Endothelial cell of umbilical vein (primary cell): ENCODE measurements at regions of chr7 and their contacts with region 1.

Region 1: DNA sequence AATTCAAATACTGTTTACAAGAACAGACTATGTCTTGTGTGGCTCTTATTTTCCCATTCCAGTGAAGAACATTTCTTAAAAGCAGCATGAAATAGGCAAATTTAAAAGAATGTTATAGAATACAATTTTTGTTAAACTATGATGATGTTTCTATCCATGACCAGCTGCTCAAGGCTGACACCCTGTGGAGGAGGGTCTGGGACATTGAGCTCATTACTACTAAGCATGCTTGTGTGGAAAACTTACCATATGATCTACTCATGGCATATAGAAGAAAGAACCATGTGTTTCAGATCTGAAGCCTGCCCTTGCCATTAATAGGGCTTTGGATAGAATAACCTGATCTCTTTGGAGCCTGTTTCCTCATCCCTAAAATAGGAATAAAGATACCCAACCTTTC is 125.0 kb downstream of the FOXP2 start:
- DNase-seq: peak; percentile 53
- H3K4me3 ChIP-seq: no peak overlapping the region
- H3K27ac ChIP-seq: no peak overlapping the region
- H3K4me1 ChIP-seq: no peaks in the 10 kb centered on the region
- H3K27me3 ChIP-seq: no peaks in the 10 kb centered on the region
- CTCF ChIP-seq: peak in 1 of 2 donors; percentile 43
- POLR2A ChIP-seq: no peak

Region 2: GRCh38 chr7:114310345-114311110 is 229.0 kb before region 1 on chr7:
- CTCF ChIA-PET with region 1: interaction called, 24 read pairs
- POLR2A ChIA-PET with region 1: no interaction called
- dilution Hi-C with region 1: no loop called
- intact Hi-C with region 1: no loop called
- DNase-seq: no peak
- H3K4me3 ChIP-seq: no peak overlapping the region
- H3K27ac ChIP-seq: no peak overlapping the region
- H3K4me1 ChIP-seq: no peaks in the 10 kb centered on the region
- H3K27me3 ChIP-seq: no peaks in the 10 kb centered on the region
- CTCF ChIP-seq: no peak
- POLR2A ChIP-seq: no peak

Region 3: DNA sequence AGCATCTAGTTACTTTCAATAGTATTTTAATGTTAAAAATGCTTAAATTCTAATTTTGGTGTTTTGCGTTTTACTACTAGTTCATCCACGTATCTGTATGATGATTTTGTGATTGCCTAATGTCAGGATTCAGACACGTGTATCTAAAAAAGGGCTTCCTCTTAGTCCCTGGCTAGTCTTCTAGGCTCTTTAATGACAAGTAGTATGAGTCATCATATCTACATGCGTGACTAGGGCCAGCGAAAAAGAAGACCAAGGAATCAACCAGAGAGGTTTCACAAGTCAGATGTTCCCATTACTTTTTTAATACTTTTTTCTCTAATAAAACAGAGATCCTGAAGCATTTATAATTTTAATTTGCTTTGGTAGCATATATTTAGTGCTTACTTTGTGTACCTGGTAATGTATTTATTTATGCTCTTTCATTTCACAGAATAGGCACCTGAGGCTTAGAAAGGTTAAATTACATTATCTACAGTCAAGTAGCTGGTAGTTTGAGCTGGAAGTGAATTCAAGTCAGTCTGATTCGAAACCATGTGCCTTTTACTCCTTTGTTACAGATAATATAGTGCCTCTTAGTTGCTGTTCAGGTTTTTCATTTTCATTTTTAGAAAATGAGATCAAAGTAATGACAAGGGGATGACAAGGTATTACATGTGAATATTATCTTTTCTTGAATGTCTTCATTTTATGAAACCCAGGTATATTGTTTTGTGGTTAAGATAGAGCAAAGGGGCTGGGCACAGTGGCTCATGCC is 15.4 kb after region 1 on chr7:
- CTCF ChIA-PET with region 1: interaction called, 12 read pairs
- POLR2A ChIA-PET with region 1: no interaction called
- dilution Hi-C with region 1: no loop called
- intact Hi-C with region 1: no loop called
- DNase-seq: no peak
- H3K4me3 ChIP-seq: no peak overlapping the region
- H3K27ac ChIP-seq: no peak overlapping the region
- H3K4me1 ChIP-seq: no peaks in the 10 kb centered on the region
- H3K27me3 ChIP-seq: no peaks in the 10 kb centered on the region
- CTCF ChIP-seq: no peak
- POLR2A ChIP-seq: no peak